Activated naive CD4-positive, alpha-beta T cell treated with anti-CD3 and anti-CD28 coated beads for 36 hours (primary cell): ENCODE measurements at regions of chr3 and their contacts with region 1.

Region 1: DNA sequence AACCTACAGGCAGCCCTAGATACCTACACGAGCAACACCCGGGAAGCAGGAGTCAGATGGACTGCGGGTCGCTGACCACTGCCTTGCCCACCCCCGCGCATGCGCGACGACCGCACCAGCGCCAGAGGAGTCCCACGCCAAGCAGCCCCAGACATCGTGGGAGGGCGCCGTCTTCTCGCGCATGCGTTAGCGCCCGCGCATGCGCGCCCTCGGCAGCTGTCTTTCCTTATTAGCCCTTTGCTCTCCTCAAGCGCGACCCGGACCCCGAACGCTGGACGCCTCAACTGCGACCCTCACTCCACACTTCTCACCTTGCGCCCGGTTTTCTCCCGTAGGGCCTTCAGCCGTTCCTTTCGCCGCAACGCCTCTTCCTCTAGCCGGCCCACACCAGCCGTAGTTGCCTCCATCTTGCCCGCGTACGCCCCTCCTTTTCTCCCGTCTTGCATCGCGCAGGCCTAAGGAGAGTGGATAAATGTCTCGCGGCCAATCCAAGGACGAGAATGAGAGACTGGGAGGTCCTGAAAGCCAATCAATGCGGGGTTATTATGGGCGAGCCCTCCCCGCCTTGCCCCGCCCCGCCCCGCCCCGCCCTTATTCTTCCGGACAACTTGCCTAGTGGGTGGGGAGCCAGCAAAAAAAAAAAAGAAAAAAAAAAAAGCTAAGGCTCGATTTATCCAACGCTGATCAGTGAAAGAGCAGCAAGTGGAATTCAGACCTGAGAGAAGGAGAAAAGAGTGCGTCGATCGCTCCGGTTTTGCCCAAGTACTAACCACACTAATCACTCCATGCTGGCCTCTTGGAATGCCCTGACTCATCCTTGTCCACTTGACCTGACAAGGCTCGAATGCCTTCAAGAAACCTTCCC is at the start of gene CCDC12:
- DNase-seq: peak; percentile 96
- H3K4me3 Mint-ChIP-seq: peak within 1 kb of the TSS; percentile 97
- H3K27ac Mint-ChIP-seq: peak within 1 kb of the TSS; percentile 97
- H3K4me1 Mint-ChIP-seq: peaks cover 69% of the 10 kb centered on the region
- H3K27me3 Mint-ChIP-seq: no peaks in the 10 kb centered on the region
- total RNA-seq, gene CCDC12: 37.6 to 43.0 TPM

Region 2: DNA sequence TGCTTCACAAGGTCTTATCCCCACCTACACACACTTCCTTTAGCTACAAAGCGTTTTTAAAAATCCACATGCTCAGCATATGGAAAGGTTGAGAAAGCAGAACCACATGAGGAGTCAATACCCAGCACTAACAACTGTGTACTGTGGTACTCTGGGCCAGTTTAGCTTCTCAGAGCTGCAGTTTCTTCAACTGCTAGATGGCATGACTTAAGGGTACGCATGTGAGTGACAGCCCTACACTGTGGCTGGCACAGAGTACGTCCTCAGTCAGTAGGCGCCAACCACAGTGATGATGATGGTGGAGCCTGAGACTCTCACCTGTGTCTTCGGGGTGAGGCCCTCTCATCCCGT is 17.4 kb before region 1 on chr3:
- CTCF ChIA-PET with region 1: interaction called, 3 read pairs
- intact Hi-C with region 1: loop called (anchors 1 kb)
- DNase-seq: peak; percentile 65
- H3K4me3 Mint-ChIP-seq: no peak overlapping the region
- H3K27ac Mint-ChIP-seq: peak overlapping the region; percentile 92
- H3K4me1 Mint-ChIP-seq: peaks cover 84% of the 10 kb centered on the region
- H3K27me3 Mint-ChIP-seq: no peaks in the 10 kb centered on the region

Region 3: DNA sequence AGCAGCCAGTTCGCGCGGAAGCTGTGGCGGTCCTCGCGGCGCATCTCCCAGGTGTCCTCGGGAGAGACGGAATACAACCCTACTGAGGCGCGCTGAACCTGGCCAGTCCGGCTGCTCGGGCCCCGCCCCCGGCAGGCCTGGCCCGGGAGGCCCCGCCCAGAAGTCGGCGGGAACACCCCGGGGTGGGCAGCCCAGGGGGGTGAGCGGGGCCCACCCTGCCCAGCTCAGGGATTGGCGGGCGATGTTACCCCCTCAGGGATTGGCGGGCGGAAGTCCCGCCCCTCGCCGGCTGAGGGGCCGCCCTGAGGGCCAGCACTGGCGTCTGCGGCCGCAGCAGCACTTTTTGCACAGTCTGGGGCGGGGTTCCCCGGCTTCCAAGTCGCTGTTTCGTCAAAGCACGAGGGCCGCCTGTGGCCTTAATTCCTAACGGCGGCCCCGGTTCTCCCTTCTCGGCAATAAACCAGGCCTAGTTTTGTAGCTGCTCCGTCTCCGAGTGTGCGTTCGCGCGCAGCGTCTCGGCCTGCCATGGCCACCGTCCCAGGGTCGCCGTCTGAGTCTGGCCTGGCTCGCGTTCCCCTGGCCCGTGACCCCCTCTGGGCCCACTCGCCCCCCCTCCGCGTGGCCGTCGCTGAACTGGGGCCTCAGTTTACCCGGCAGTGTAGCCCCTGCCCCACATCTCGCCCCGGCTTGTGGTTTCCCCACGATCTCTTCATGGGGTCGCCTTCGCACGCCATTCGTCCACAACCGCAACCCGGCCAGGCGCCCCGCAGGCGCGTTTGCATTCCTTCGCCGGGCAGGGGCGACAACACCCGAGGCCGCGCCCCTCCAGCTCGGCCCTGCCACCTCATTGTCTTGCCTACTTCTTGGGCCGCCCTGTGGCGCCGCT is 32.9 kb after region 1 on chr3:
- CTCF ChIA-PET with region 1: no interaction called
- intact Hi-C with region 1: loop called (anchors 1 kb)
- DNase-seq: peak; percentile 77
- H3K4me3 Mint-ChIP-seq: peak overlapping the region; percentile 45
- H3K27ac Mint-ChIP-seq: peak overlapping the region; percentile 36
- H3K4me1 Mint-ChIP-seq: peaks cover 2% of the 10 kb centered on the region
- H3K27me3 Mint-ChIP-seq: no peaks in the 10 kb centered on the region

Region 4: GRCh38 chr3:47164007-47164881 is 187.7 kb after region 1 on chr3 and contains the start of gene SETD2:
- CTCF ChIA-PET with region 1: no interaction called
- intact Hi-C with region 1: loop called (anchors 2 kb)
- DNase-seq: peak; percentile 87
- H3K4me3 Mint-ChIP-seq: peak within 1 kb of the TSS; percentile 96
- H3K27ac Mint-ChIP-seq: peak within 1 kb of the TSS; percentile 98
- H3K4me1 Mint-ChIP-seq: peaks cover 43% of the 10 kb centered on the region
- H3K27me3 Mint-ChIP-seq: no peaks in the 10 kb centered on the region
- total RNA-seq, gene SETD2: 27.7 to 28.1 TPM

Region 5: DNA sequence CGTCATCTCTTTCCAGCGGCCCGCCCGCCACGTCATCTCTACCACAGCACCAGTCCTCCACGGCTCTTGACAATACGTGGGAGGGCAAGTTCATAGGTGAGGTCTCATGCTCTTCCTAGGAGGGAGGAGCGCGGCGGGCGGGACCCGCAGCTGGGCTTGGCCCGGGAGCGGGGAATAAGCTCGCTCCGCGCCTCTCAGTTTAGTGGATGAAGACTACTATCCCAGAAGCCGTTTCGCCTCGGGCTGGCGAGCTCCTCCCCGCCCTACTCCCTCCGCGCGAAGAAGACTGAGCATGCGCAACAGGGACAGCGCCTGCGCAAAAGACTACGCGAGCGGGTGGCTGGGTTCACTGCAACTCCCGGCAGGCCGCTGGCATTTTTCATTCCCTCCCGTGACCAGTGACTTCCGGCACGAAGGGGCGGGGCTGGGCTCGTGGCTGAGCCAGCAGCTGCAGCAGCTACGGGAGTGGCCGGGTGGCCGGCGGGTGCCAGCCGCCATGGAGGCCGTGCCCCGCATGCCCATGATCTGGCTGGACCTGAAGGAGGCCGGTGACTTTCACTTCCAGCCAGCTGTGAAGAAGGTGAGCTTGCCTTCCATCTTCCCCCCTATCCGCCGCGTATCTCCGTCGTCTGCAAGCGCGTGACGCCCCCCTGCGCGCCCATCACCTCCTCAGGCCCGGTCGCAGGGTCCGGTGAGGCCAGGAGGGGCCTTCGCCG is 404.2 kb after region 1 on chr3 and contains the start of gene PTPN23:
- CTCF ChIA-PET with region 1: no interaction called
- intact Hi-C with region 1: loop called (anchors 2 kb)
- DNase-seq: peak; percentile 99
- H3K4me3 Mint-ChIP-seq: peak within 1 kb of the TSS; percentile 100
- H3K27ac Mint-ChIP-seq: peak within 1 kb of the TSS; percentile 98
- H3K4me1 Mint-ChIP-seq: peaks cover 37% of the 10 kb centered on the region
- H3K27me3 Mint-ChIP-seq: no peaks in the 10 kb centered on the region
- total RNA-seq, gene PTPN23: 18.7 to 21.6 TPM

Region 6: GRCh38 chr3:47455806-47456452 is 479.4 kb after region 1 on chr3:
- CTCF ChIA-PET with region 1: no interaction called
- intact Hi-C with region 1: no loop called
- DNase-seq: no peak
- H3K4me3 Mint-ChIP-seq: no peak overlapping the region
- H3K27ac Mint-ChIP-seq: no peak overlapping the region
- H3K4me1 Mint-ChIP-seq: peaks cover 31% of the 10 kb centered on the region
- H3K27me3 Mint-ChIP-seq: no peaks in the 10 kb centered on the region

Region 7: GRCh38 chr3:47781685-47782445 is 805.3 kb after region 1 on chr3 and contains the start of gene SMARCC1:
- CTCF ChIA-PET with region 1: no interaction called
- intact Hi-C with region 1: loop called (anchors 5 kb)
- DNase-seq: peak; percentile 99
- H3K4me3 Mint-ChIP-seq: peak within 1 kb of the TSS; percentile 95
- H3K27ac Mint-ChIP-seq: peak within 1 kb of the TSS; percentile 92
- H3K4me1 Mint-ChIP-seq: peaks cover 21% of the 10 kb centered on the region
- H3K27me3 Mint-ChIP-seq: no peaks in the 10 kb centered on the region
- total RNA-seq, gene SMARCC1: 82.5 to 84.5 TPM

Region 8: GRCh38 chr3:48188266-48189201 is 1212.0 kb after region 1 on chr3 and contains the start of gene CDC25A:
- CTCF ChIA-PET with region 1: no interaction called
- intact Hi-C with region 1: loop called (anchors 10 kb)
- DNase-seq: peak; percentile 98
- H3K4me3 Mint-ChIP-seq: peak within 1 kb of the TSS; percentile 88
- H3K27ac Mint-ChIP-seq: peak within 1 kb of the TSS; percentile 61
- H3K4me1 Mint-ChIP-seq: peaks cover 17% of the 10 kb centered on the region
- H3K27me3 Mint-ChIP-seq: peaks cover 11% of the 10 kb centered on the region
- total RNA-seq, gene CDC25A: 40.8 to 41.8 TPM